ENCODE measurements at regions of chr5 and their contacts with region 1.

Region 1: GRCh38 chr5:159156426-159157238 is 52.7 kb downstream of the RNF145 start:
- DNase-seq: peak in 1 of 10 donors; percentile 17

Region 2: DNA sequence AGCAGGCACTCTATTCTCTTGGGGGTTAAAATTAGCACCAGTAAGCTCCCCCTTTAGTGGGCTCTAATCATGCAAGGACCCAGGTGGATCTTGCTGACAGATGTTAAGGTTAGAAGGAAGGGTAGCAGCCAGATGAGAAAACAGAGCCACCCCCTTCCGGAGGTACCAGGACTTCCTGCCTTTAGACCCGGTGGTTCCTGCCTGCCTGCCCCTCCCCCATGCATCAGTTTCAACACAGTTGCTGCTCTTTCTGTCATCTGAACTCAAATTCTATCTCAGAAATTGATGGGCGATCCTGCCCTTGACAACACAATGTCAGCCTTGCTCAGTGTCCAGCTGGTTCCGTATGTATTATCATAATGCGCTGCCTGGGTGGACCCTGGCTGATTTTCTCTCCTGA is 344.2 kb before region 1 on chr5:
- intact Hi-C with region 1: no loop called
- DNase-seq: no peak

Region 3: GRCh38 chr5:159021901-159022556 is 134.6 kb before region 1 on chr5:
- intact Hi-C with region 1: no loop called
- DNase-seq: no peak

Region 4: GRCh38 chr5:159106569-159107282 is 49.9 kb before region 1 on chr5:
- intact Hi-C with region 1: no loop called
- DNase-seq: peak in 9 of 10 donors; percentile 53 to 94 (median 76)

Region 5: GRCh38 chr5:159209438-159210305 is 53.0 kb after region 1 on chr5 and contains the start of gene RNF145:
- intact Hi-C with region 1: loop called (anchors 5 kb)
- DNase-seq: peak; percentile 63 to 97 (median 80)